B cell (primary cell): ENCODE measurements at regions of chr7 and their contacts with region 1.

Region 1: GRCh38 chr7:116786791-116787443 is 75.5 kb upstream of the CAPZA2 start:
- DNase-seq: peak; percentile 76
- ATAC-seq: peak; percentile 96
- H3K4me3 ChIP-seq: no peak overlapping the region
- H3K4me3 Mint-ChIP-seq: no peak overlapping the region
- H3K27ac ChIP-seq: no peak overlapping the region
- H3K27ac Mint-ChIP-seq: no peak overlapping the region
- H3K4me1 ChIP-seq: peaks cover 4 to 11% of the 10 kb centered on the region in 2 donors
- H3K4me1 Mint-ChIP-seq: no peaks in the 10 kb centered on the region
- H3K27me3 ChIP-seq: no peaks in the 10 kb centered on the region
- H3K27me3 Mint-ChIP-seq: no peaks in the 10 kb centered on the region
- CTCF ChIP-seq: peak; percentile 60

Region 2: DNA sequence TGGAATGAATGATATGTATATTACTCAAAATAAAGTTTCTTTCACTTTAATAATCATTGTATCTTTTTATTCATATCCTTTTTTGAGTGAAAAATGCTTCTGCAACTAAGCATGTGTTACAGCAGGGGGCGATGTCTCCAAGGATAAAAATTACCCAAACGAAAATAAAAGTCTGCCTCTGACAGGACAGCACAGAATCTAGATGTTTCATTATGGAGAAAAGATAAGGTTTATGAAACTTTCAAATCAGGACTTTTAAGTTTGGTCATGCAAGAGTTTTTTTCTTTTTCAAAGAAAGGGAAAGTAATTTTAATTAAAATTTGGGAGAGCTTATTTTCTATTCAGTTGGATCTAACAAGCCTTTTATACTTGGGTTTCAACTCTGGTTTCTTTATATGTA is 528.2 kb before region 1 on chr7:
- CTCF ChIA-PET with region 1: interaction called, 11 read pairs
- POLR2A ChIA-PET with region 1: no interaction called
- intact Hi-C with region 1: no loop called
- DNase-seq: peak; percentile 63
- ATAC-seq: peak; percentile 51
- H3K4me3 ChIP-seq: no peak overlapping the region
- H3K4me3 Mint-ChIP-seq: no peak overlapping the region
- H3K27ac ChIP-seq: no peak overlapping the region
- H3K27ac Mint-ChIP-seq: no peak overlapping the region
- H3K4me1 ChIP-seq: no peaks in the 10 kb centered on the region
- H3K4me1 Mint-ChIP-seq: peaks cover 2% of the 10 kb centered on the region
- H3K27me3 ChIP-seq: no peaks in the 10 kb centered on the region
- H3K27me3 Mint-ChIP-seq: no peaks in the 10 kb centered on the region
- CTCF ChIP-seq: peak; percentile 86

Region 3: GRCh38 chr7:116671681-116672595 is 115.0 kb before region 1 on chr7 and contains the start of gene MET:
- CTCF ChIA-PET with region 1: interaction called, 5 read pairs
- POLR2A ChIA-PET with region 1: no interaction called
- intact Hi-C with region 1: loop called (anchors 5 kb)
- DNase-seq: peak; percentile 71
- ATAC-seq: peak; percentile 83
- H3K4me3 ChIP-seq: peak within 1 kb of the TSS; percentile 28 to 54 (median 39)
- H3K4me3 Mint-ChIP-seq: peak within 1 kb of the TSS; percentile 82
- H3K27ac ChIP-seq: no peak within 1 kb of the TSS
- H3K27ac Mint-ChIP-seq: no peak within 1 kb of the TSS
- H3K4me1 ChIP-seq: peaks cover 14 to 15% of the 10 kb centered on the region in 2 donors
- H3K4me1 Mint-ChIP-seq: peaks cover 18% of the 10 kb centered on the region
- H3K27me3 ChIP-seq: peaks cover 0 to 52% (median 47%) of the 10 kb centered on the region in 4 experiments
- H3K27me3 Mint-ChIP-seq: peaks cover 69% of the 10 kb centered on the region
- CTCF ChIP-seq: no peak
- total RNA-seq, gene MET: 0.59 and 1.9 TPM in 2 replicates

Region 4: DNA sequence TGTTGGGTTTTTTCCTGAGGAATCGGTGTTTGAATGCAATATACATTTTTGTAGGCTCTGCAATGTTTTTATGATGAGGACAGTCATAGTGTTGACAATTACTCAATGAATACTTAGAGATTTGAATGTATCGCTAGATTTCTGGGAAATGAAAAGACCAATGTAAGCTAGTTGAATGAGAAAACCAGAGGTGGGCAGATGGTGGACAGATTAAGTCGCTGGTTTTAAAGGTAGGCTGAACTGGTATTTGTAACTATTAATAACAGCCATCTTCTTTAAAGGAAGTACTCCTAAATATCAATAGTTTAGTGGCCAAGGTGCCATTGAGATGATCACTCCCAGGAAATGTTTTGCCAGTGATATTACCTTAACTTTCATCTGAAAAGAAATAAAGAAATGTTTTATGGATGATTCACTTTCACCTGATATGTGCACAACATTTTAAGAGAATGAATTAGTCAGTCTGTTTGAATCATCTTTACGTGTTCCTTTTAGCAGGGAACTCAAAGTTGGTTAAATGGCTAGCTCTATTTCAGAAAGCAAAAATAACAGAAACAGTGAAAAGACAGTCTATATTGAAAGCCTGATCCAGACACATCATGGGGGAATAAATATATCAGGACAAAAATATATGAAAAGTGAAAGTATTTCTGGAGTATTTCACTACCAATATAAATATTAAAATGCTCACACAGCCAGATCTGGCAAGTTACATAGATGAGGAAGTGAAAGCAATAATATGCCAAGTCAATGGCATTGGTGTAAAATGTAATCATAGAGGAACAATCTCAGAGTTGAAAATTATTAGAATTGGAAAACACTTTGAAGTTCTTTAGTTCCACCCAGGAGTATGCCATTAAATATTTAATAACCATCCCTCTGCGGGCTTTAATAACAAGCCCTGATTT is 94.3 kb before region 1 on chr7:
- CTCF ChIA-PET with region 1: no interaction called
- POLR2A ChIA-PET with region 1: no interaction called
- intact Hi-C with region 1: loop called (anchors 5 kb)
- DNase-seq: peak; percentile 47
- ATAC-seq: peak; percentile 60
- H3K4me3 ChIP-seq: peak overlapping the region in 1 of 5 experiments; percentile 11
- H3K4me3 Mint-ChIP-seq: peak overlapping the region; percentile 46
- H3K27ac ChIP-seq: no peak overlapping the region
- H3K27ac Mint-ChIP-seq: no peak overlapping the region
- H3K4me1 ChIP-seq: peaks cover 15 to 23% of the 10 kb centered on the region in 2 donors
- H3K4me1 Mint-ChIP-seq: peaks cover 22% of the 10 kb centered on the region
- H3K27me3 ChIP-seq: peaks cover 0 to 50% (median 34%) of the 10 kb centered on the region in 4 experiments
- H3K27me3 Mint-ChIP-seq: peaks cover 41% of the 10 kb centered on the region
- CTCF ChIP-seq: no peak